ENCODE measurements at regions of chr22 and their contacts with region 1.

Region 1: DNA sequence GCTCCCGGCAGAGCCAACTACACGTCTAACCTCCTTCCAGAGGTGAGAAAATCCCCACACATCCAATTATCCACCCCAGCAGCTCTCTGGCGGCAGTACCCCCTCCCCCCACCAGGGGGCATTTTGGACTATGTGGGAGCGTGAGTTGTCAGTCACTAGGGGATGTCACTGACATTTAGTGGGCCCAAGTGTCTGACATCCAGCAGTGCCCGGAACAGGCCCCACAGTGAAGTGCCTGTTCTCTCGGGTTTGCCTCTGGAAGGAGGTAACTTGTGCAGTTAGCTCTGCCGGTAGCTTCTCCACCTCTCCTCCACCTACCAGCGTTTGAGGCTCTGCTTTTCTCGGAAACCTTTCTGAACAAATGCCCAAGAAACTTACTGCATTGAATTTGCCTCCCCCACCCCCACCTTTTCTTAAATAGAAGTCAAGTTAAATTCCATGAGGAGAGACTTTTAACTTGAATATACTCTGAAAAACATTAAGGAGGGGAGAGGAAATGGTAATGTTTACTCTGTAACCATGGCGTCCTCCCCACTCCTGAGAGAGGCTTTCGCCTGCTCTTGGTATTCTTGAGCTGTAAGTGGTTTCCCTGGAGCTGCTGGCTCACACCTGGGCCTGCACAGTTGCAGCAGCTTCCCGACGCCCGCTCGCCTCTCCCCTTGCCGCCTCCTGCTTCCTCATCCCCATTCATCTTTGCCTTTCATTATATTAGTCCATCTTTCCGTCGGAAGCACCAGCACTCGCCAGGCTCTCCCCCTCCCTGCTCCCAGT is 112.8 kb downstream of the WNT7B start:
- DNase-seq: peak; percentile 70 to 94 (median 85)
- ATAC-seq: peak; percentile 84
- H3K4me3 ChIP-seq: no peak overlapping the region
- H3K27ac ChIP-seq: peak overlapping the region; percentile 62 to 67
- H3K4me1 ChIP-seq: peaks cover 17 to 25% of the 10 kb centered on the region in 2 donors
- H3K27me3 ChIP-seq: peaks cover 11 to 55% of the 10 kb centered on the region in 2 donors
- CTCF ChIP-seq: peak; percentile 90 to 93

Region 2: GRCh38 chr22:45577746-45578523 is 286.2 kb before region 1 on chr22:
- intact Hi-C with region 1: loop called in 1 of 2 experiments (anchors 10 kb)
- DNase-seq: peak; percentile 76 to 95 (median 88)
- ATAC-seq: peak; percentile 92
- H3K4me3 ChIP-seq: no peak overlapping the region
- H3K27ac ChIP-seq: no peak overlapping the region
- H3K4me1 ChIP-seq: no peaks in the 10 kb centered on the region
- H3K27me3 ChIP-seq: peaks cover 0 to 41% of the 10 kb centered on the region in 2 donors
- CTCF ChIP-seq: peak; percentile 86 to 93

Region 3: GRCh38 chr22:45638834-45639746 is 225.1 kb before region 1 on chr22:
- intact Hi-C with region 1: loop called in 1 of 2 experiments (anchors 10 kb)
- DNase-seq: peak in 2 of 4 donors; percentile 73 to 86
- ATAC-seq: peak; percentile 82
- H3K4me3 ChIP-seq: peak overlapping the region in 1 of 2 donors; percentile 3
- H3K27ac ChIP-seq: peak overlapping the region; percentile 57 to 65
- H3K4me1 ChIP-seq: peaks cover 7 to 25% of the 10 kb centered on the region in 2 donors
- H3K27me3 ChIP-seq: peaks cover 0 to 82% of the 10 kb centered on the region in 2 donors
- CTCF ChIP-seq: peak in 1 of 2 donors; percentile 13

Region 4: GRCh38 chr22:46006379-46007002 is 142.3 kb after region 1 on chr22:
- intact Hi-C with region 1: no loop called
- DNase-seq: peak; percentile 83 to 98 (median 92)
- ATAC-seq: peak; percentile 88
- H3K4me3 ChIP-seq: peak overlapping the region in 1 of 2 donors; percentile 29
- H3K27ac ChIP-seq: peak overlapping the region; percentile 86 to 91
- H3K4me1 ChIP-seq: peaks cover 23 to 62% of the 10 kb centered on the region in 2 donors
- H3K27me3 ChIP-seq: no peaks in the 10 kb centered on the region
- CTCF ChIP-seq: peak; percentile 93 to 98

Measured in left lung (tissue), 14 donors.